Activated T-helper 1 cell treated with anti-CD3 and anti-CD28 coated beads, Interleukin-12 subunit alpha, Interleukin-12 subunit beta, Interleukin-2, Interleukin-4 antibody, amounts not matched to agents 30 ng/mL and 10 ng/mL and 1 ng/mL, durations not matched to agents 14 hours and 24 hours and 36 hours (primary cell): ENCODE measurements at regions of chr13 and their contacts with region 1.

Region 1: DNA sequence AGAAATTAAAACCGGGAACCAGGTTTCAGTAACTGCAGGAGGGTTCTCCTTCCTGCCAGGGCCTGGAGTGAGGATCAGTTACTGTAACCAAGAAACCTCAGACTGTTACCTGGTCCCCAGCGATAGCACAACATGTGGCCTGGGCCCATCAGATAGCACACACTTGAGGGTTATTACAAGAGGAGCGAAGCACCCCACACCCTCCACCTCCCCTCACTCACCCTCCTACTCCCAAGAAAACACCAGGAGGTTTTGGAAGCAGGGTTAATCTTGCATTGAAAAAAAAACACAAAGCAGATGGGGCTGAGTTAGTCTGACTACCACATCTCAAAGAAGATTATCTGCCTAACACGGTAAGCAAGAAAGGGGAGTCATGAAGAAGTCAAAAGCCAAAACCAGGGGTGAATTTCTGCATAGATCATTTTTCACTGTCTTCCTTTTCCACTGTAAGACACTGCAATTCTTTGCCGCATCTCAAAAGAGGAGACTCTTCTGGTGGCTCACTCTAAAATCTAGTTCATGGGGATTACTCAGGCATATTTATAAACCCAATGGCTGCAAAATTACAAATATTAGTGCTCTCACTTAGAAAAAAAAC is 75.9 kb upstream of the DOCK9 start:
- DNase-seq: no peak
- H3K4me3 Mint-ChIP-seq: peak overlapping the region; percentile 48
- H3K27ac Mint-ChIP-seq: peak overlapping the region; percentile 28
- H3K4me1 Mint-ChIP-seq: peaks cover 67% of the 10 kb centered on the region
- H3K27me3 Mint-ChIP-seq: no peaks in the 10 kb centered on the region

Region 2: DNA sequence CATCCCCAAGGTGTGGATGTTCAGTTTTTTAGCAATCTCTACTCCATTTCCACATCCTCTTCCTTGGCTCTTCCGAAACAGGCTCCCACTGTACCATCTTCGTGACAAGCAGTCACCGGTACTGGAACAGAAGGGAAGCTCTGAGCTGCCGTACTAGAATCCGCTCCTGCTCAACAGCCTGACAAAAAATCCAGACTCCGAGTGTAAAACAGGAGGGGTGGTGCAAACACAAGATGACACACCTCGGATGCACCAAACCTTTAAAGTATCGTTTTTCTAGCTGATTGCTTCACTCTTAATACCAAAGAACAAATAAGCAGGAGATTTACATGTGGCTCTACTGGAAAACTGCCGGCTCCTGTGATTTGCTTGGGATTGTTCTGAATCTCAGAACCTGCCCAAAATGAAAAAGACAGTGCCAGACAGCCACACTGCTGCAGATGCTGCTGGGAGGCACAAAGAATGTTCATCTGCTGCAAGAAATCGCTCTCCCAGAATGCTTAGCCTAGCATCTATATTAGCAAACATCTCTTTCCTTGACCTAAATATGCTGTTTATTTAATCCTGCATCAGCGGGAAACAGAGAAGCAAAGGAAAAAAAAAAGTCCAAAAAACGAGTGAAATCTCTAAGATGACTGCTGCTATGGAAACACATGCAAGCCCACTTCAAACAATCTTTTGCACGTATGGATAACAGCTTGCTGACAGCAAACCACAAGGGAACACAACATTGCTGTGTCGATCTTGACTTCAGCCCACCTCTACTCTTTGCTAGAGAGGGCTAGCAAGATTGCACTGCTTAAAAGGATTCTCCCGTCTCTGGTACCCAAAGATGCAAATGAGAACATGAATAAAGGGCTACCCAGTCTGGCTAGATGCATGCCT is 37.9 kb before region 1 on chr13:
- intact Hi-C with region 1: no loop called
- DNase-seq: no peak
- H3K4me3 Mint-ChIP-seq: no peak overlapping the region
- H3K27ac Mint-ChIP-seq: peak overlapping the region; percentile 45
- H3K4me1 Mint-ChIP-seq: peaks cover 42% of the 10 kb centered on the region
- H3K27me3 Mint-ChIP-seq: no peaks in the 10 kb centered on the region

Region 3: DNA sequence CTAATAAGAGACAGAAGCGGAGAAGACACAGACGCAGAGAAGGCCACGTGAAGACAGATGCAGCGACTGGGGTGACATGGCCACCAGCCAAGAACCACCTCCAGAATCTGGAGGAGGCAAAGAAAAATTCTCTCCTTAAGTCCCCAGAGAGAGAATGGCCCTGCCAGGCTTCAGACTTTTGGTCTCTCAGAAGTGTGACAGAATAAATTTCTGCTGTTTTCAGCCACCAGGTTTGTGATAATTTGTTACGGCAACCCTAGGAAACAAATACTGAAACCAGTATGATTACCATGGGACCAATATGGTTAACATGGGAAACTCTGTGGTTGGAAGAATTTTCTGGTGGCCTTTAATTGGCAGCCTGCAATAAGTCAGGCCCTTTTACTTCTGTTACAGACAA is 11.9 kb before region 1 on chr13:
- intact Hi-C with region 1: loop called (anchors 1 kb)
- DNase-seq: no peak
- H3K4me3 Mint-ChIP-seq: no peak overlapping the region
- H3K27ac Mint-ChIP-seq: no peak overlapping the region
- H3K4me1 Mint-ChIP-seq: peaks cover 71% of the 10 kb centered on the region
- H3K27me3 Mint-ChIP-seq: peaks cover 2% of the 10 kb centered on the region

Region 4: GRCh38 chr13:99066219-99066618 is 12.5 kb after region 1 on chr13:
- intact Hi-C with region 1: loop called (anchors 1 kb)
- DNase-seq: no peak
- H3K4me3 Mint-ChIP-seq: peak overlapping the region; percentile 46
- H3K27ac Mint-ChIP-seq: peak overlapping the region; percentile 37
- H3K4me1 Mint-ChIP-seq: peaks cover 71% of the 10 kb centered on the region
- H3K27me3 Mint-ChIP-seq: no peaks in the 10 kb centered on the region